ENCODE measurements at regions of chr5 and their contacts with region 1.

Region 1: DNA sequence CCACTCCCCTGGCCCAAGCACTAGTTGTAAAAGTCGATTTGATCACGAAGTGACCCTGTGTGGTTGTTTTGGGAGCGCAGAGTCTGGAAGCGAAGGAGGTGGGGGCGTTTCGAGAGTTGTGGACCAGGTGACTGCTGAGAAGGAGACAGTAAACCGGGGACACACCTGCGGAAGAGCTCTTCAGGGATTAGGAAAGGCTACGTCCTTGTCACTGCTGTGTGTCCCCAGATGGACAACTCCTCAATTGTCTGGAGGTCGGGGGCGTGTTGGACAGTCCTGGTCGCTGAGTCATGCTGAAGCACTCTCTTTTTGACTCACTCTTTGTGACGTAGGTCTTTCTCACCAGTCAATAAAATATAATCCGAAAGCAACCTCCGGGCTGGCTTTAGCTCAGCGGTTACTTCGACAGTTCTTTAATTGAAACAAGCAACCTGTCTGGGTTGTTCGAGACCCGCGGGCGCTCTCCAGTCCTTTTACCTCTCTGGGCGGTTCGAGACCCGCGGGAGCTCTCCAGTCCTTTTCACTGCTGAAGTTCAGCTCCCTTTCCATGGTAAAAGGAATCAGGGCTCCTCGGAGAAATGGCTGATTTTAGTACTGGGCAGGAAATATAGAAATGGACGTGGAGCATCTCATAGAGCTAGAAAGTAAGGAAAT is 10.8 kb downstream of the ZMAT2 start:
- DNase-seq: peak; percentile 96
- ATAC-seq: peak; percentile 85
- H3K4me3 ChIP-seq: peak overlapping the region; percentile 69 to 98 (median 73)
- H3K4me3 Mint-ChIP-seq: peak overlapping the region; percentile 95
- H3K27ac ChIP-seq: peak overlapping the region; percentile 64 to 78
- H3K27ac Mint-ChIP-seq: peak overlapping the region; percentile 96
- H3K4me1 ChIP-seq: peaks cover 5 to 11% of the 10 kb centered on the region in 2 donors
- H3K4me1 Mint-ChIP-seq: peaks cover 14% of the 10 kb centered on the region
- H3K27me3 ChIP-seq: no peaks in the 10 kb centered on the region
- H3K27me3 Mint-ChIP-seq: no peaks in the 10 kb centered on the region
- CTCF ChIP-seq: no peak

Region 2: DNA sequence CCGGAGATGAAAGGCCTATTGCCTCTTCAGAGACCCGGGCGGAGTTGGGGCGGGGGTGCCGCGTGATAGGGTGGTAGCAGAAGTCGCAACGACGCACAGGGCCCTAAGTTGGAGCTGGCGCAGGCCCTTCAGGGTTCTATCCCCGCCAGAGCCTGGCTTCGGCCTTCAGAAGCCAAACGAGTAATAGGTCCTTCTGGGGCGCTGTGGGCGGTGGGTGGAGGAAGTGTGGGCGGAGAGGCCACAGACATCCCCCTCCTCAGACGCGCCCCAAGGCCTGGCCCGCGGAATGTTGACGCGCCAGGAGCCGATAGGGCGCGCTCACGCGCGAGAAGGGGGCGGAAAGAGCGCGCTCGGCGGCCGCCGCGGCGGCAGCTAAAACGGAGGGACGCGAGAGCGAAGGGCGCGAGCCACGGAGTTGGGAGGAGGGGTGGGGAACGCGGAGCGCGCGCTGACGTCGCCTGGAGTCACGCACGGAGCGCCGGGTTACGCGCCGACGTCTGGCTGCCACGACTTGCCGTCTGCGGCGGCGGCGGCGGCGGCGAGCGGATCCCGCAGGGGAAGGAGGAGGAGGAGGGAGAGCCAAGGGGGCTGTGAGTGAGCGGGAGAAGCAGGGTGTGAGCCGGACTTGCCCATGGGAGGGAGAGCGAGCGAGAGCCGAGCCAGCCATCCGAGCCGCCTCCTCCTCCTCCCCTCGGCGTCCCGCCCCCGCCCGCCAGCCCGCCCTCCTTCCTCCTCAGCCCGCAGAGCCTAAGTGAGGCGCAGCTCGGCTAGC is 603.5 kb before region 1 on chr5:
- CTCF ChIA-PET with region 1: no interaction called
- POLR2A ChIA-PET with region 1: no interaction called
- intact Hi-C with region 1: loop called (anchors 5 kb)
- DNase-seq: peak; percentile 98
- ATAC-seq: peak; percentile 85
- H3K4me3 ChIP-seq: peak overlapping the region in 4 of 5 experiments; percentile 60 to 75 (median 68)
- H3K4me3 Mint-ChIP-seq: peak overlapping the region; percentile 96
- H3K27ac ChIP-seq: peak overlapping the region; percentile 97 to 99
- H3K27ac Mint-ChIP-seq: peak overlapping the region; percentile 99
- H3K4me1 ChIP-seq: peaks cover 35% of the 10 kb centered on the region in 2 donors
- H3K4me1 Mint-ChIP-seq: peaks cover 46% of the 10 kb centered on the region
- H3K27me3 ChIP-seq: peaks cover 5 to 23% (median 13%) of the 10 kb centered on the region in 4 experiments
- H3K27me3 Mint-ChIP-seq: peaks cover 20% of the 10 kb centered on the region
- CTCF ChIP-seq: peak; percentile 43

Region 3: GRCh38 chr5:140488914-140489313 is 222.1 kb before region 1 on chr5:
- CTCF ChIA-PET with region 1: no interaction called
- POLR2A ChIA-PET with region 1: no interaction called
- intact Hi-C with region 1: no loop called
- DNase-seq: no peak
- ATAC-seq: no peak
- H3K4me3 ChIP-seq: no peak overlapping the region
- H3K4me3 Mint-ChIP-seq: no peak overlapping the region
- H3K27ac ChIP-seq: no peak overlapping the region
- H3K27ac Mint-ChIP-seq: no peak overlapping the region
- H3K4me1 ChIP-seq: no peaks in the 10 kb centered on the region
- H3K4me1 Mint-ChIP-seq: no peaks in the 10 kb centered on the region
- H3K27me3 ChIP-seq: no peaks in the 10 kb centered on the region
- H3K27me3 Mint-ChIP-seq: no peaks in the 10 kb centered on the region
- CTCF ChIP-seq: no peak

Measured in B cell (primary cell).